ENCODE measurements at regions of chr2 and their contacts with region 1.

Region 1: GRCh38 chr2:61443342-61444041 is 27.4 kb downstream of the USP34 start:
- DNase-seq: no peak
- H3K4me3 Mint-ChIP-seq: no peak overlapping the region
- H3K27ac Mint-ChIP-seq: no peak overlapping the region
- H3K4me1 Mint-ChIP-seq: peaks cover 48% of the 10 kb centered on the region
- H3K27me3 Mint-ChIP-seq: no peaks in the 10 kb centered on the region

Region 2: GRCh38 chr2:61432990-61433389 is 10.5 kb before region 1 on chr2:
- CTCF ChIA-PET with region 1: no interaction called
- POLR2A ChIA-PET with region 1: no interaction called
- intact Hi-C with region 1: no loop called
- DNase-seq: no peak
- H3K4me3 Mint-ChIP-seq: no peak overlapping the region
- H3K27ac Mint-ChIP-seq: no peak overlapping the region
- H3K4me1 Mint-ChIP-seq: peaks cover 51% of the 10 kb centered on the region
- H3K27me3 Mint-ChIP-seq: no peaks in the 10 kb centered on the region

Region 3: DNA sequence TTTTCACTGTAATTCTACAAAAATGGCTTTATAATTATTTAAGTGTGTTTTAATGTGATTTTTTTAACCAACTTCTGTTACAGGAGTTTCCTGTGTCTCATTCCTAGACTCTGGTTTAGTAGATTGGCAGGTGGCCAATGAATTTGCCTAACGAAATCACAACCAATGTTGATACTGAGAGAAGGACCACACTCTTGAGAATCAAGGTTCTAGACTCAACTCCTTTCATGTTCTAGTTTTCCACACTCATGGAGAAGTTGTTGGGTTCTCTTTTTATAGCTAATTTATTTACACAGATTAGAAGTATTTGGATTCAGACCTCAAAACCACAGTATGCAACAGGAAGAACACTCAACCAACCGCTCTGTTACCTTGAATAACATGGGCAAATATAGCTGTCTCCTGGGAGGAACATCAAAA is 50.0 kb after region 1 on chr2:
- CTCF ChIA-PET with region 1: no interaction called
- POLR2A ChIA-PET with region 1: no interaction called
- intact Hi-C with region 1: no loop called
- DNase-seq: no peak
- H3K4me3 Mint-ChIP-seq: no peak overlapping the region
- H3K27ac Mint-ChIP-seq: peak overlapping the region; percentile 81
- H3K4me1 Mint-ChIP-seq: peaks cover 20% of the 10 kb centered on the region
- H3K27me3 Mint-ChIP-seq: no peaks in the 10 kb centered on the region

Region 4: GRCh38 chr2:61670591-61671501 is 227.4 kb after region 1 on chr2:
- CTCF ChIA-PET with region 1: no interaction called
- POLR2A ChIA-PET with region 1: no interaction called
- intact Hi-C with region 1: loop called (anchors 10 kb)
- DNase-seq: peak; percentile 46
- H3K4me3 Mint-ChIP-seq: peak overlapping the region; percentile 52
- H3K27ac Mint-ChIP-seq: peak overlapping the region; percentile 66
- H3K4me1 Mint-ChIP-seq: peaks cover 19% of the 10 kb centered on the region
- H3K27me3 Mint-ChIP-seq: no peaks in the 10 kb centered on the region

Measured in activated CD4-positive, alpha-beta memory T cell treated with anti-CD3 and anti-CD28 coated beads for 36 hours (primary cell).